ENCODE measurements at regions of chr10 and their contacts with region 1.

Region 1: GRCh38 chr10:34681933-34682332 is 133.2 kb downstream of the PARD3 start:
- DNase-seq: no peak
- H3K4me3 ChIP-seq: no peak overlapping the region
- H3K4me3 Mint-ChIP-seq: no peak overlapping the region
- H3K27ac Mint-ChIP-seq: no peak overlapping the region
- H3K4me1 ChIP-seq: no peaks in the 10 kb centered on the region
- H3K4me1 Mint-ChIP-seq: peaks cover 11% of the 10 kb centered on the region
- H3K27me3 ChIP-seq: no peaks in the 10 kb centered on the region
- H3K27me3 Mint-ChIP-seq: no peaks in the 10 kb centered on the region
- CTCF ChIP-seq: no peak

Region 2: DNA sequence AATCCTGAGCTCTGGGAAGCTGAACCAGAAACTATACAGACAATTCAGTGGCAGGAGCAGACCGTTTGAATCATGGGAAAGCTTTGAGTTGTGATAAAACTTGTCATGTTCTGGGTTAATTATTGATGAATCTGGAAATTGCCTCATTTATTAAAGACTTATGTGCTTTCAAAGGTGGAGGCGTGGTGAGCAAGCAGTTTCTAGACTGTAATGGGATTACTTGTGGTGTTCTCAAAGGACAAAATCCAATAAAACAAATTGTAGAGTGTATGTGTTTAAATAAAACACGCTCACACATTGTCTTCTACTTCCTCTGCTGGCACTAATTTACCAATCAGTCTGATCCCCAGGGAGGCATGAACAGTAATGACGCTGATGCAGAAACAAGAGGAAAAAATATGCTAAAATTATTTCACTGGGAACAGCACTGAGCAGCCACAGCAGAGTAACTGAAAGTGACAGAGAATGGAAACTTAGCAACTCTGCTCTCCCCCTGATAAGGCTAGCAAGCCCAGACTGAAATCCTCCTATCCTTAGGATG is 108.1 kb after region 1 on chr10:
- CTCF ChIA-PET with region 1: no interaction called
- POLR2A ChIA-PET with region 1: no interaction called
- intact Hi-C with region 1: loop called (anchors 5 kb)
- DNase-seq: no peak
- H3K4me3 ChIP-seq: no peak overlapping the region
- H3K4me3 Mint-ChIP-seq: no peak overlapping the region
- H3K27ac Mint-ChIP-seq: no peak overlapping the region
- H3K4me1 ChIP-seq: peaks cover 9% of the 10 kb centered on the region
- H3K4me1 Mint-ChIP-seq: peaks cover 36% of the 10 kb centered on the region
- H3K27me3 ChIP-seq: no peaks in the 10 kb centered on the region
- H3K27me3 Mint-ChIP-seq: no peaks in the 10 kb centered on the region
- CTCF ChIP-seq: no peak

Region 3: GRCh38 chr10:34985823-34986222 is 303.9 kb after region 1 on chr10:
- CTCF ChIA-PET with region 1: interaction called, 7 read pairs
- POLR2A ChIA-PET with region 1: no interaction called
- intact Hi-C with region 1: loop called (anchors 5 kb)
- DNase-seq: peak; percentile 50 to 54
- H3K4me3 ChIP-seq: no peak overlapping the region
- H3K4me3 Mint-ChIP-seq: no peak overlapping the region
- H3K27ac Mint-ChIP-seq: no peak overlapping the region
- H3K4me1 ChIP-seq: no peaks in the 10 kb centered on the region
- H3K4me1 Mint-ChIP-seq: peaks cover 8% of the 10 kb centered on the region
- H3K27me3 ChIP-seq: no peaks in the 10 kb centered on the region
- H3K27me3 Mint-ChIP-seq: no peaks in the 10 kb centered on the region
- CTCF ChIP-seq: peak in 1 of 2 experiments; percentile 67

Measured in Caco-2 (cell line).